ENCODE measurements at regions of chr11 and their contacts with region 1.

Region 1: GRCh38 chr11:124586238-124586860 is 16.6 kb downstream of the OR8A1 start:
- DNase-seq: peak; percentile 37
- H3K4me3 ChIP-seq: no peak overlapping the region
- H3K27ac ChIP-seq: no peak overlapping the region
- H3K4me1 ChIP-seq: no peaks in the 10 kb centered on the region
- H3K27me3 ChIP-seq: peaks cover 4% of the 10 kb centered on the region
- CTCF ChIP-seq: peak; percentile 56 to 73

Region 2: GRCh38 chr11:124315052-124315451 is 271.3 kb before region 1 on chr11:
- CTCF ChIA-PET with region 1: no interaction called
- dilution Hi-C with region 1: no loop called
- in situ Hi-C with region 1: no loop called
- intact Hi-C with region 1: no loop called
- DNase-seq: peak; percentile 32
- H3K4me3 ChIP-seq: no peak overlapping the region
- H3K27ac ChIP-seq: no peak overlapping the region
- H3K4me1 ChIP-seq: no peaks in the 10 kb centered on the region
- H3K27me3 ChIP-seq: no peaks in the 10 kb centered on the region
- CTCF ChIP-seq: no peak

Region 3: DNA sequence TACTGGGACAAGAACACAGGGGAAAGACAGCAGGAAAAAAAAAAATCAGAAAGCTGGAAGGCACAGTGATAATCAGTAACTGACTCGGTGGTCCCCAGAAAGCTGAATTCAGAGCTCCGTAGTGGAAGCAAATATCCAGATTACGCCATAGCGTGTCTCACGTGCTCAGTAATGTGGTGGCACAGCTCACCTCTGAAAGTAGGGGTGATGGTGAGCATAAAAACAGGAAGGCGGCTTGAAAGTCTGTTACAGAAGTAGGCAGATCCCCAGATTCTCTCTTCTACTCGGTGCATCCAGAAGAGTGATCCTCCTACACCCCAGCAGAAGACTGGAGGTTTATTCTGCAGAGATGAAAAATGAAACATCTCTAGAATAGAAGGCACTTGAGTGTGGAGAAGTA is 176.4 kb before region 1 on chr11:
- CTCF ChIA-PET with region 1: no interaction called
- dilution Hi-C with region 1: no loop called
- in situ Hi-C with region 1: loop called (anchors 5 kb)
- intact Hi-C with region 1: loop called (anchors 1 kb)
- DNase-seq: no peak
- H3K4me3 ChIP-seq: no peak overlapping the region
- H3K27ac ChIP-seq: no peak overlapping the region
- H3K4me1 ChIP-seq: no peaks in the 10 kb centered on the region
- H3K27me3 ChIP-seq: peaks cover 4% of the 10 kb centered on the region
- CTCF ChIP-seq: no peak

Region 4: GRCh38 chr11:124415356-124415923 is 170.9 kb before region 1 on chr11:
- CTCF ChIA-PET with region 1: no interaction called
- dilution Hi-C with region 1: no loop called
- in situ Hi-C with region 1: loop called (anchors 5 kb)
- intact Hi-C with region 1: loop called (anchors 1 kb)
- DNase-seq: no peak
- H3K4me3 ChIP-seq: no peak overlapping the region
- H3K27ac ChIP-seq: no peak overlapping the region
- H3K4me1 ChIP-seq: no peaks in the 10 kb centered on the region
- H3K27me3 ChIP-seq: peaks cover 4% of the 10 kb centered on the region
- CTCF ChIP-seq: peak; percentile 47 to 70

Region 5: GRCh38 chr11:124778281-124778680 is 191.9 kb after region 1 on chr11:
- CTCF ChIA-PET with region 1: no interaction called
- dilution Hi-C with region 1: no loop called
- in situ Hi-C with region 1: no loop called
- intact Hi-C with region 1: no loop called
- DNase-seq: no peak
- H3K4me3 ChIP-seq: no peak overlapping the region
- H3K27ac ChIP-seq: no peak overlapping the region
- H3K4me1 ChIP-seq: no peaks in the 10 kb centered on the region
- H3K27me3 ChIP-seq: no peaks in the 10 kb centered on the region
- CTCF ChIP-seq: peak; percentile 25 to 33